KBM-7 (cell line): ENCODE measurements at regions of chr4 and their contacts with region 1.

Region 1: DNA sequence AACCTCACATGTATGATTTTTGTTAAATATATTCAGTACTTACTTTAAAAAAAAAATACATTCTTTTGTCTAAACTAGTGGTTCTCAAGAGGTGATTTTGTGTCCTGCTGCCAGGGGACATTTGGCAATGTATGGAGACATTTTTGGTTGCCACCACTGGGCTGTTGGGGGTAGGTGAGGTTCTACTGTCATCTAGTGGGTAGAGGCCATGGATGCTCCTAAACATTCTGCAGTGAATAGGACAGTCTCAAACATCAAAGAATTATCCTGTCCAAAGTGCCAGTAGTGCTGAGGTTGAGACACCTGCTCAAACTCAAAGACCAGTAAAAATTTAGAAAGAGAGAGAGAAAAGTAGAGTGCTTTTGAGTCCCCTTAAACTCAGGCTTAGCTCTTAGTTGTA is 32.9 kb upstream of the PGM2 start:
- DNase-seq: peak; percentile 42

Region 2: GRCh38 chr4:37434469-37434868 is 359.1 kb before region 1 on chr4:
- in situ Hi-C with region 1: loop called (anchors 25 kb)
- DNase-seq: no peak

Region 3: GRCh38 chr4:37603070-37603468 is 190.5 kb before region 1 on chr4:
- in situ Hi-C with region 1: loop called (anchors 25 kb)
- DNase-seq: peak; percentile 79